Activated T-helper 1 cell treated with anti-CD3 and anti-CD28 coated beads, Interleukin-12 subunit alpha, Interleukin-12 subunit beta, Interleukin-2, Interleukin-4 antibody, amounts not matched to agents 30 ng/mL and 10 ng/mL and 1 ng/mL, durations not matched to agents 14 hours and 24 hours and 36 hours (primary cell): ENCODE measurements at regions of chr19 and their contacts with region 1.

Region 1: GRCh38 chr19:14136509-14137281 is at the start of gene ASF1B:
- DNase-seq: peak; percentile 98
- H3K4me3 Mint-ChIP-seq: peak within 1 kb of the TSS; percentile 83
- H3K27ac Mint-ChIP-seq: peak within 1 kb of the TSS; percentile 92
- H3K4me1 Mint-ChIP-seq: peaks cover 31% of the 10 kb centered on the region
- H3K27me3 Mint-ChIP-seq: no peaks in the 10 kb centered on the region
- total RNA-seq, gene ASF1B: 76.3 and 77.4 TPM in 2 replicates

Region 2: DNA sequence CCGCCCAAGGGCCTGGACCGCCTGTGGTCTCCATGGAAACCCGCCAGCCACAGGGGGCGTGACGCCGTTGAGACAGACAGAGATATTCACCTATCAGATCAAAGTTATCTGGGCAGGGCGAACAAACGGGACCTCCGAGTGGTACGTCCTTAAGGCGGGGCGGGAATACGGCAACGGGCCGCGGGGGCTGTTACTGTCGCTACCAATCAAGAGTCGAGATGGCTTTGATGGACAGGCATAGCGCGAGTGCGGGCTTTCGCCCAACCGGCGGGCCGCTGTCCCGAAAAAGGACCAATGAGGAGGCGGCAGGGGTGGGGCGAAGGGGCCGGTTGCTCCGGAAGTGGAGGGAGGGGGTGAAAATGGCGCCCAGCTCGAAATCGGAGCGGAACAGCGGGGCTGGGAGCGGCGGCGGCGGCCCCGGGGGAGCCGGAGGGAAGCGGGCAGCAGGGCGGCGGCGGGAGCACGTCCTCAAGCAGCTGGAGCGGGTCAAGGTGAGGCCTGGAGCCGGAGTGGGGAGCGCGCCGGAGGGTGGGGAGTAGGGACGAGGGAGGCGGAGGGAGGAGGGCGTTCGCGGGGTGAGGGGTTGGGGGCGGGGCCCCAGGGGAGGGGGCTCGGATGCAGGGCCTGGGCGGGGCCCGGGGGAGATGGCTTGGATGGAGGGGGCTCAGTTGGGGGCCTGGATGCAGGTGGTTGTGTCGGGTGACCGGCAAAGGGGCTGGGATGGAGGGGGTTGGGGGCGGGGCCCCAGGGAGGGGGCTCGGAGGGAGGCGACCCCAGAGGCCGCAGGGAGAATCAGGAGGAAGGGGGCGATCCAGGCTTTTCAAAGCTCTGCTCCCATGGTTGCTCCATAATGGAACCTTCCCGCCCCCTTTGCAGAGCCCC is 184.3 kb before region 1 on chr19 and contains the start of gene DCAF15:
- intact Hi-C with region 1: loop called (anchors 1 kb)
- DNase-seq: peak; percentile 99
- H3K4me3 Mint-ChIP-seq: peak within 1 kb of the TSS; percentile 96
- H3K27ac Mint-ChIP-seq: peak within 1 kb of the TSS; percentile 86
- H3K4me1 Mint-ChIP-seq: peaks cover 17% of the 10 kb centered on the region
- H3K27me3 Mint-ChIP-seq: no peaks in the 10 kb centered on the region
- total RNA-seq, gene DCAF15: 57.8 and 61.5 TPM in 2 replicates

Region 3: DNA sequence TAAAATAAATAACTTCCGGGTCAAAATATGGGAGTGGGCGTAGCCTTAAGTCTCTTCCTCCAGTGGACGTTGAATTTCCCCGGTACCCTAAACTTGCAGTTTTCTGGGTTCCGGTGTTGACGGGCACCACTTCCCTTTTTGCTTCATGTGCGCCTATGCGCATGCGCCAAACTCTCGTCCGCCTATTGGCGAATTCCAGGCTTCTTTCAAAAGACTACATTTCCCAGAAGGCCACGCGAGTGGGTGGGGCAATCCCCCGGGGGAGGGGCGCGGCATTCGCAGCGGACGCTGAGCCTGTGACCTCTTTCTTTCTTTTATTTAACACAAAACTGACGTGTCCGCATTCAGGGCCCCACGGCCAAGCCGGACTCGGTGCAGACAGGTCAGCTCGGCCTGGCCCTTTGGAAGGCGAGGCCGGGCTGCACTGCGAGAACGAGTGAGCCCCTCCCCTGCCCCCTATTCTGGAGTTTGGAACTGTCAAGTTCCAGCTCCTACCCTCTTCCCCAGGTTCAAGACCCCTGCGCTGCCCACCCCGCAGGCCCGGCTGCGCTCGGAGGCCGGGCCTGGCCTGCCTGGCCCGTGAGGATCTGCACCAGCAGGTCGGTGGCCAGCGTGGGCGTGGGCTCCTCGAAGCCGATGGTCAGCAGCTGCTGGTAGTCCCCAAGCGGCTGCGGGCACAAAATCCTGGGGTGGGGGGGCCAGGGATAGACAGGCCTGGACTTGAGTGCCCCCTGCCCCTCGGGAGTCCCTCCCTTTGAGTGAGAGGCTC is 55.2 kb before region 1 on chr19:
- intact Hi-C with region 1: loop called (anchors 2 kb)
- DNase-seq: peak; percentile 99
- H3K4me3 Mint-ChIP-seq: peak overlapping the region; percentile 96
- H3K27ac Mint-ChIP-seq: peak overlapping the region; percentile 97
- H3K4me1 Mint-ChIP-seq: peaks cover 8% of the 10 kb centered on the region
- H3K27me3 Mint-ChIP-seq: no peaks in the 10 kb centered on the region

Region 4: DNA sequence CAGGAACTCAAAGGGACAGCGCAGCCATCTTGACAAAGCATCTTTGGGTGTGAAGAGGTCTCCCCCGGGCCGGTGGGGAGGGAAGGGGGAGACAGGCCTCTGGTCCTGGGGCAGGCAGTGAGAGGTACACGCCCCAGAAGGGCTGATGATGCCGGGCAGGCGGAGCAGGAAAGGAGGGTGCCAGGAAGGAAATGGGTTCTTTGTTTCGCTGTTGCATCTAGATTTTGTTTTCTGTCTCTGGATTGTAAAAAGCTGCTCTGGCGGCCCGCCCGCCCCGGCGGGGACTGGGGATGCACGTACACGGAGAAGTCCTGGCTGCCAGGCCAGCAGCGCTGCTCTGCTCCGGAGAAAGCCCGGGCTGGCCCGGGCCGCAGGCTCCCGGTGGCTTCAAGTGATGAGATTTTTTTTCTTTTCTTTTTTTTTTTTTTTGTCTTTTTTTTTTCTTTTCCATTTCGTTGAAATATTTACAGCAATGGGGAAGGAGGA is 12.9 kb after region 1 on chr19:
- intact Hi-C with region 1: loop called (anchors 1 kb)
- DNase-seq: peak; percentile 33
- H3K4me3 Mint-ChIP-seq: peak overlapping the region; percentile 78
- H3K27ac Mint-ChIP-seq: peak overlapping the region; percentile 97
- H3K4me1 Mint-ChIP-seq: peaks cover 29% of the 10 kb centered on the region
- H3K27me3 Mint-ChIP-seq: no peaks in the 10 kb centered on the region

Region 5: DNA sequence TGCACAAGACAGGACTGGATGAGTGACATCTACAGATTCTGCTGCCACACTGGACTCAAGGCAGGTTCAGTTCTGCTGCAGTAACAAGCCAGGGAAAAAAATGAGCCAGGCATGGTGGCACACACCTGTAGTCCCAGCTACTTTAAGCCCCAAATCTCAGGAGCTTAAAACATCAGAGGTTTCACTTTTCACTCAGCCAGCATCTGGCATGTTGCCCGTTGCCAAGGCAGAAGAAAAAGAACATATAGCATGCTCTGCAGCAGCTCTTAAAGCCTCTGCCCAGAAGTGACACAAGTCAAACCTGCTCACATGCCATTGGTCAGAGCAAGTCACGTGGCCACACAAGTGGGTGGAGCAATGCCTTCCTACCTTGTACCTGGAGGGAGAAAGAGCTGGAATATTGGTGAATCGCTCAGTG is 229.8 kb after region 1 on chr19:
- intact Hi-C with region 1: loop called (anchors 1 kb)
- DNase-seq: peak; percentile 86
- H3K4me3 Mint-ChIP-seq: peak overlapping the region; percentile 74
- H3K27ac Mint-ChIP-seq: peak overlapping the region; percentile 97
- H3K4me1 Mint-ChIP-seq: peaks cover 80% of the 10 kb centered on the region
- H3K27me3 Mint-ChIP-seq: no peaks in the 10 kb centered on the region

Region 6: DNA sequence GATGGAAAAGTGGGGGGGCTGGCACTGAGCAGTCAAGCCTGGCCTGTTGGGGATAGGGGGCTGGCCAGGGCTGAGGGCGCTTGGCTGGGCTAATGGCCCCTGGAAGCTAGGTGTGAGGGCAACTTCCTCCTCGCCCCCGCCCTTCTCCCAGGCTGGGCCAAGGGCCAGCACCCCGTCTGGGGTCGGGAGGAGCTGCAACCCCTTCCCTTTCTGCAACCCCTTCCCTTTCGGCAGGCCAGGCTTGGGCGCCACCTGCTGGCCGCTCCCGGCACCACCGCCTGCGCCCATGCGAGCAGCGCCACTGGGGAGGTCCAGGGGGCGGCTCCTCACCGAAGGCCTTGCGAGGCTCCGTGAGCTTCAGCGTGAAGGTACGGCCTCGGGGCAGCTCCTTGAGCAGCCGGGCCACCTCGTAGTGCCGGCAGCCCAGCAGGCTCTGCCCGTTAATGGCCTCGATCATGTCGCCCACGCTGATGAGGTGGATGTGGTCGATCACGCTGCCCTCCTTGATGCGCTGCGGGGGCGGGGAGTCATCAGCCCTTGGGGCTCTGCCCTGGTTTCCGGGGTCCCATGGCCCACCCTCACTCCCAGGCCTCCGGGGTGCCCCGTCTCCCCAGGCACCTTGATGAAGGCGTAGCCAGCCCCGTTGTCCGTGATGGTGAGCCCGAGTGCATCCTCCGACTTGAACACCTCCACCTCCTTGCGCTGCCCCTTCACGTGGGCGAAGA is 343.4 kb after region 1 on chr19:
- intact Hi-C with region 1: loop called (anchors 5 kb)
- DNase-seq: peak; percentile 70
- H3K4me3 Mint-ChIP-seq: no peak overlapping the region
- H3K27ac Mint-ChIP-seq: no peak overlapping the region
- H3K4me1 Mint-ChIP-seq: peaks cover 17% of the 10 kb centered on the region
- H3K27me3 Mint-ChIP-seq: peaks cover 3% of the 10 kb centered on the region